ENCODE measurements at regions of chr22 and their contacts with region 1.

Region 1: DNA sequence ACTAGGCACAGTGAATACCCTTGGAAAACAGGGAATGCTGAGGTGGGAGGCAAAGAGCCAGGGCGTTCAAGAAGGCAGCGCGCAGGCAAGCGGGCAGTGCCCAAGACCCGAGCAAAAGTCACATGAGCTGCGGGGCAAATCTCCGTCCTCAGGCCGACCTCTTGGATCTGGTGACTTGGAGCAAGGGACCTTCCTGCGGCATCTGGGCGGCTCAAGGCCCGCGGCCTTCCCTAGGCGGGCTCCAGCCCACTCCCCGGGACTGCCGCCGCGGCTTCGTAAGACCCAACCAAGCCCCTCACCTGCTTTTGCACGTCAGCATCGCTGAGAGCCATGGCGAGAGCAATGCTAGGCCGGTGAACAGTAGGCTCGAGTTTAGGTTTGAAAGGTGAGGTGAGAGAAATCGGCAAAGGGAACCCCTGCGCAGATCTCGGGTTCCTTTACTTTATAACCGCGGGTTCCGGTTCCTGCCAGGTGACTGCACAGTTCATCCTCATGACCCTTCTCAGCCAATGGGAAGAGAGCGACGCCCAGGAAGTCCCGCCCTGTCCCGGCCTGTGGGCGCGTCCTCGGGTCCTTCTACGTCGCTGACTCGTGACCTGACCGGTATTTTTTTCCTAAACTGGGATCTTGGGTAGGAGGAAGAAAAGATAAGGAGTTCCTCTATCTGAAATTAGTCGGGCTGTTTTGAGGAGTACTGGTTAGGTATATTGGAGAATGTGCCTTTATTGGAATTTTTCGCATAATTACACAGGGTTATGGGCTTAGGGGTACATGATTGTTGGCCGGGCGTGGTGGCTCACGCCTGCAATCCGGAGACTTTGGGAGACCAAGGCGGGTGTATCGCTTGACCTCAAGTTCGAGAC is at the start of gene ATP6V1E1:
- DNase-seq: peak; percentile 97
- H3K4me3 ChIP-seq: peak within 1 kb of the TSS; percentile 100
- H3K27ac ChIP-seq: peak within 1 kb of the TSS; percentile 87
- H3K4me1 ChIP-seq: no peaks in the 10 kb centered on the region
- H3K27me3 ChIP-seq: no peaks in the 10 kb centered on the region
- CTCF ChIP-seq: no peak
- total RNA-seq, gene ATP6V1E1: 105 and 121 TPM in 2 replicates

Region 2: DNA sequence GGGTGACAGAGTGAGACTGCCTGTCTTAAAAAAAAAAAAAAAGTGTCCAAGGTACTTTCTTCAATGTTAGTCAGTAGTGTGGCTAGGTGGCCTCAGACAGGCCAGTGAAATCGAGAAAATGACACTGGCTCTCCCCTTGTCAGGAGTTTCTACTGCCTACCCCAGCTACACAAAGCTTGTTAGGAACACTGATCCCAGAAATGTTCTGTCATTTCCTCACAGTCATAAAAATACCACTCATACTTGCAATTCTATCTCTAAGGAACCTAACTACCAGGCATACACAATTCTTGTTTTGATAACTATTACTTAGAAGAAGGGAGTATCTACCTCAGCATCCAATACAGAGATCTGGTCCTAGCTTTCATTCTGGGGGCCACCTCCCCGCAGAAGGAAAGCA is 31.3 kb before region 1 on chr22:
- CTCF ChIA-PET with region 1: no interaction called
- POLR2A ChIA-PET with region 1: no interaction called
- intact Hi-C with region 1: loop called (anchors 2 kb)
- DNase-seq: no peak
- H3K4me3 ChIP-seq: no peak overlapping the region
- H3K27ac ChIP-seq: no peak overlapping the region
- H3K4me1 ChIP-seq: no peaks in the 10 kb centered on the region
- H3K27me3 ChIP-seq: no peaks in the 10 kb centered on the region
- CTCF ChIP-seq: no peak

Region 3: DNA sequence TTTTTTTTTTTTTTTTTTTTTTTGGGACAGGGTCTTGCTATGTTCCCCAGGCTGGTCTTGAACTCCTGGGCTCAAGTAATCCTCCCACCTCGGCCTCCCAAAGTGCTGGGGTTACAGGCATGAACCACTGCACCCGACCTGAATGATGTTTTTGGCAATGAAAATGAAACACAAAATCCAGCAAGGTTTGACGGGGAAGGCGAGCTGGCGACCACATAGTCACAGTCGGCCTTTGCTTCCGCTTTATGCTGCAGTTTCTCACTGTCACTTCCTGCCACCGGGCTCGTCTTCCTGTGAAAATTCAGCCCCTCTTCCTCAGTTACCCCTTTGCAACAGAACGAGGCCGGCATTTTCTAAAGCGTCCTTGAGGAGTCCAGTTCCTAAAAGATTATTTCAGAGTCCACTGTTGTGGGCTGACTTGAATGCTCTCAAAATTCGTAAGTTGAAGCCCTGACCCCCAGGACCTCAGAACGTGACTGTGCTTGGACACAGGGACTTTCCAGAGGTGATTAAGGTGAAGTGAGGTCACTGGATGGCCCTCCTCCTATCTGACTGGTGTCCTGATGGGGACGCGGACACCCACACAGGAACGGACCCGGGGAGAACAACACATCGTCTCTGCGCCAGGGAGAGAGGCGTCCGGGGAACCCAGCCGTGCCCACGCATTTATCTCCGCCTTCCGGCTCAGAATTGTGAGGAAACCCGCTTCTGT is 148.6 kb after region 1 on chr22:
- CTCF ChIA-PET with region 1: no interaction called
- POLR2A ChIA-PET with region 1: interaction called, 21 read pairs
- intact Hi-C with region 1: no loop called
- DNase-seq: no peak
- H3K4me3 ChIP-seq: no peak overlapping the region
- H3K27ac ChIP-seq: no peak overlapping the region
- H3K4me1 ChIP-seq: peaks cover 25% of the 10 kb centered on the region
- H3K27me3 ChIP-seq: no peaks in the 10 kb centered on the region
- CTCF ChIP-seq: no peak

Measured in A673 (cell line).